Cardiac septum (tissue), 1 donor: ENCODE measurements at regions of chr15 and their contacts with region 1.

Region 1: GRCh38 chr15:41827880-41828806 is at the start of gene JMJD7:
- DNase-seq: peak; percentile 99
- total RNA-seq, gene JMJD7: 16.3 TPM

Region 2: GRCh38 chr15:41894791-41895463 is 66.8 kb after region 1 on chr15:
- intact Hi-C with region 1: loop called (anchors 5 kb)
- DNase-seq: peak; percentile 87

Region 3: GRCh38 chr15:41980654-41981323 is 152.6 kb after region 1 on chr15:
- intact Hi-C with region 1: loop called (anchors 5 kb)
- DNase-seq: peak; percentile 66

Region 4: DNA sequence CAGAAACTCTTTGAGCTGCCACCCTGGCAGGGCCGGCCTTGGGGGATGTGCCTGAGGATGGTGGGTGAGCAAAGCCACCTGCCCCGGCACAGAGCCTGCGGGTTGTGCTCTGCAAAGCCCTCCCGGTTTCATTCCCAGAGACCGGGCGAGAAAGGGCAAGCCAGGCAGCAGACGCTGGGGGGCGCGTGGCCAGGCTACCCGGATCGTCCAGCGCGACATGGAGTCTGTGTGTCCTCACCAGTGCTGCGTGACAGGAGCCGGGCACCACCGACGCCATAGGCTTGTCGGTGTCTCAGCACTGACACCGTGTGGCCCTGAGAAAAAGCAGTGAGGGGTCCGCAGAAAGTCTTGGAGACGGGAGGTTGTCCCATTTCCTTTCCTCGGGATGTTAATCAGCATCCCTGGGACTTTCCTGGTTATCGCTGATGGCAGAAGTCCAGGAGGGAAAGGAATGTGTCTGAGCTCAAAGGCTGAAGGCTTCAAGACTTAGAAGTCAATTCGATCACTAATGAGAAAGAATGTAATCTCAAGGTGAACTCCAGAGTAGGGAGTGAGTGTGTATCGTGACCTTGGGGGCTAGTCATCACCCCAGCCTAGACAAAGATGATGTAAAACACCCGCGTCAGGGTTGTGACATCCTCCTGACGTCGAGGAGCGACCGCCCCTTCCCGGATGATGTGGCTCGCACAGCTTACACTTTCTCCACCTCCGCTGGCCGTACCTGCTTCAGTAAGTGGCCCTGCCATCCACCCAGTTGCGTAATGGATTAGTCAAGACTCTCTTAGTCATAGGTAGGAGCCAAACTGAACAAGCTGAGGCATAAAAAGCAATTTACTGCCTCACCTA is 229.0 kb after region 1 on chr15:
- intact Hi-C with region 1: loop called (anchors 5 kb)
- DNase-seq: peak; percentile 87